HCT116 (cell line): ENCODE measurements at regions of chr2 and their contacts with region 1.

Region 1: DNA sequence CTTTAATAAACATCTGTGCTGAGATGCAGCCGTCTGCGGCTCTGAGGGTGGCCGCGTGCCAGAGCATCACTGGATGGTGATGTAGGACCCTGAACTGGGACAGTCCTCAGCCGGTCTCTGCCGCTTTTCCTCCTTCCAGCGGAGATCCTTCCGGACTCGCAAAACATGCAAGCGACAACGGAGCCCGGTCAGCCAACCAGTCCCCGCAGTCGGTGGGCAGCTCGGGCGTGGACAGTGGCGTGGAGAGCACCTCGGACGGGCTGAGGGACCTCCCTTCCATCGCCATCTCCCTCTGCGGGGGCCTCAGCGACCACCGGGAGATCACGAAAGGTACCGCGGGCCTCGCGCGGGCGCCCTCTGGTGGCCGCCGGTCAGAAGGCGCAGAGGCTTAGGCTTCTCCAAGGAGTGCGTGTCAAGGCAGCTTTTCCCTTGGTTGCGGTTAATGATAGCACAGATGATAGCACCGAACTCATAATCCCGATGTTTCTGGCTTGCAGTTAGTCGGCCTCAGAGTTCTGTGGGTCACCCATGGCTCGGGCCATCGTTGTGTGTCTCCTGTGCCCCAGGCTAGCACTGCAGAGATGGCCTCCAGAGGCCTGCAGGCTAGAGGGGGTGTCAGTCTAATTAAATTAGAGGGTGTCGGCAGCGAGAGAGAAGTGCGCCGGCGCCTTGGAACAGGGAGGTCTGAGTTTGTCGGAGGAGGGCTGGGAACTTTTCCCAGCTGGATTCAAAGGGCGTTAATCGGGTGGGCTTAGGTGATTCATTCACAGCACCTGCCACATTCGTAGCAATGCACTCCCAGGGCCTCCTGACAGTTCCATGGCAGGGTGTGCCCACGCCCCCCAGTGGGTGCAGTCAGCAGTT is 38.5 kb downstream of the LPIN1 start:
- DNase-seq: no peak
- ATAC-seq: peak; percentile 92
- H3K4me3 ChIP-seq: no peak overlapping the region
- H3K27ac ChIP-seq: no peak overlapping the region
- H3K4me1 ChIP-seq: no peaks in the 10 kb centered on the region
- H3K27me3 ChIP-seq: no peaks in the 10 kb centered on the region
- CTCF ChIP-seq: peak; percentile 14 to 83 (median 72); a peak in 4 of 6 replicates
- POLR2A ChIP-seq: no peak
- RAD21 ChIP-seq: peak; percentile 32; the same call in 1 of the 2 replicates

Region 2: DNA sequence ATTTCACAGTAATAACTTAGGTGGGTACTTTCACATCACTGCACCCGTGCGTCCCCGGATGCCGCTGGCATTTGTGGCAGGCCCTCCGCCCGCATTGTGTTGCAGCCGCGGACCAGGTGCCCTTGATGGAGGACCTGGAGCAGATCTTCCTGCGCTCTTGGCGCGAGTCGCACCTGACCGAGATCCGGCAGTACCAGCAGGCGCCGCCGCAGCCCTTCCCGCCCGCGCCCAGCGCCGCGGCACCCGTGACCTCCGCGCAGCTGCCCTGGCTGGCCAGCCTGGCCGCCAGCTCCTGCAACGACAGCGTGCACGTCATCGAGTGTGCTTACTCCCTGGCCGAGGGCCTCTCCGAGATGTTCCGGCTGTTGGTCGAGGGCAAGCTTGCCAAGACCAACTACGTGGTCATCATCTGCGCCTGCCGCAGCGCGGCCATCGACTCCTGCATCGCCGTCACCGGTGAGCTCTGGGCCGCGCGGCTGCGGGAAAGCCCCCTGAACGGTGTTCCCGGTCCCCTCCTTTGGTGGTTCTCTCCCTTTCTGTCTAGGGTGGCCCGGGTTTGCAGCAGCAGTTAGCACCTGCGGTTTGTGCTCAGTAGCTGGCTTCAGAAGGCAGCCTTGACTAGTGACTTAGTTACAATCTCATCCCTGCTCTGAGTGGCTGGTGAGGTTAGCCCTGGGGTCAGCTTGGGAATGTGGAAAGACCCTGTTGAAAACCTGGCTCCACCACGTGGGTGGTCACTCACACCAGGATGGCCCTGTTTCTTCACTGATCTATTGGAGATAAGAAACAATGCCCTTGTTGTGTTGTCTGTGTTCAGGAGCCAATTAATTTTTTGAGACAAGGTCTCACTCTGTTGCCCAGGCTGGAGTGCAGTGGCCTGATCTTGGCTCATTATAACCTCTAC is 192.1 kb before region 1 on chr2:
- CTCF ChIA-PET with region 1: no interaction called
- POLR2A ChIA-PET with region 1: no interaction called
- RAD21 ChIA-PET with region 1: no interaction called
- intact Hi-C with region 1: loop called (anchors 5 kb)
- DNase-seq: no peak
- ATAC-seq: no peak
- H3K4me3 ChIP-seq: no peak overlapping the region
- H3K27ac ChIP-seq: no peak overlapping the region
- H3K4me1 ChIP-seq: no peaks in the 10 kb centered on the region
- H3K27me3 ChIP-seq: no peaks in the 10 kb centered on the region
- CTCF ChIP-seq: no peak
- POLR2A ChIP-seq: no peak
- RAD21 ChIP-seq: no peak